AG04449 (cell line): ENCODE measurements at regions of chr3 and their contacts with region 1.

Region 1: DNA sequence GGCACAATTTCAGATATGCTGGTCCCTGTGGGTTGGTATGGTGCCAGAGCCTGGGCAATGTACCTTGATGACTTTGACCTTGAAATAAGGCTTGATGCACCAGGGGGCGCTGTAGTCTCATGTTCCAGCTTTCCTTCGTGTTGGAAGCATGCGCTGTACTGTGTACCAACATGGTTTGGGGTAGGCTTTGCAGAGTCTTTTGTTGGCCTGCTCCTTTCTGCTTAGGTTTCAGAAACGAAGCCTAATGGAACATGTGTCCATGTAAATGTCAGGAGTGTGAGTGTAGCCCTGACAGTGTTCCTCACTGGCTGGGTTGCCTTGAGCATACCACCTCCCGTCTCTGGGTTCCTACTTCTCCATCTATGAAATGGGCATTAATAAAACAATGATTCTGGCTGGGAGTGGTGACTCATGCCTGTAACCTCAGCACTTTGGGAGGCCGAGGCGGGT is 3.6 kb upstream of the CCR4 start:
- DNase-seq: peak; percentile 7
- H3K4me3 ChIP-seq: no peak overlapping the region
- CTCF ChIP-seq: peak; percentile 78

Region 2: DNA sequence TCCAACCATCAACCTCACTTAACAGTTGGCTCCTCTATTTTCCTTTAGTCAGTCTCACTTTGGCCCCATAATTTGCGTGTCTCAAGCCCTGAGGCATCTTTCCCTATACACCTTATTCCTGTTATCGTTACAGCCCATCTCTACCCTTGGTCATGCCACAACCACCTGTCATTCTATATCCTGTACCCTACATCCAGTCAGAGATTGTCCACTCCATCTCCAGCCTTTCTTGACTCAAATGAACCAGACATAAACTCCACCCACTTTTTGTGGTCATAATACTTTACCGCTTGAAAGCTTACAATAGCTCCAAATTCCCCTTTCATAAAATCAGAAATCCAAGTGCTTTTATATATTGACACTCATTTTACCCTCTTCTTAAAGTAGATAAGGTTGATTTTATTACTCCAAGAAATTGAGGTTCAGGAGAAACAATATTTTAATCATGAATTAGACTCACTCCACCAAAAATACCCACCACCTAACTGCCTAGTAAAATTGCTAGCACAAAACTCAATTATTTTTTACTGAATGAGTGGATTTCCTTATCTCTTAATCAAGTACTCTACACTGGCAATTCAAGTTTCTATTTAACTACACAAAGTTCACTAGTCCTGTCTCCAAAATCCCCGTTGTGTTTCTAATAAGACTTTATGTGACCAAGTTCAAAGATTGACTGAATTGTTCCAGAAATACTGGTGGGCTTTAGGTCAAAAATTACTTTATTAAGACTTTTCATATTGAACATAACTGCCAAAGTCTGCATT is 12.8 kb after region 1 on chr3:
- CTCF ChIA-PET with region 1: interaction called, 21 read pairs
- POLR2A ChIA-PET with region 1: no interaction called
- DNase-seq: no peak
- H3K4me3 ChIP-seq: no peak overlapping the region
- CTCF ChIP-seq: no peak

Region 3: GRCh38 chr3:33202711-33203457 is 255.1 kb after region 1 on chr3:
- CTCF ChIA-PET with region 1: no interaction called
- POLR2A ChIA-PET with region 1: no interaction called
- DNase-seq: no peak
- H3K4me3 ChIP-seq: no peak overlapping the region
- CTCF ChIP-seq: no peak